Colonic mucosa (tissue), 4 donors: ENCODE measurements at regions of chr22 and their contacts with region 1.

Region 1: GRCh38 chr22:19970479-19971275 is 29.1 kb upstream of the TXNRD2 start:
- DNase-seq: peak; percentile 69
- H3K4me3 ChIP-seq: no peak overlapping the region
- H3K27ac ChIP-seq: no peak overlapping the region
- H3K4me1 ChIP-seq: no peaks in the 10 kb centered on the region
- H3K27me3 ChIP-seq: no peaks in the 10 kb centered on the region
- CTCF ChIP-seq: peak; percentile 94

Region 2: DNA sequence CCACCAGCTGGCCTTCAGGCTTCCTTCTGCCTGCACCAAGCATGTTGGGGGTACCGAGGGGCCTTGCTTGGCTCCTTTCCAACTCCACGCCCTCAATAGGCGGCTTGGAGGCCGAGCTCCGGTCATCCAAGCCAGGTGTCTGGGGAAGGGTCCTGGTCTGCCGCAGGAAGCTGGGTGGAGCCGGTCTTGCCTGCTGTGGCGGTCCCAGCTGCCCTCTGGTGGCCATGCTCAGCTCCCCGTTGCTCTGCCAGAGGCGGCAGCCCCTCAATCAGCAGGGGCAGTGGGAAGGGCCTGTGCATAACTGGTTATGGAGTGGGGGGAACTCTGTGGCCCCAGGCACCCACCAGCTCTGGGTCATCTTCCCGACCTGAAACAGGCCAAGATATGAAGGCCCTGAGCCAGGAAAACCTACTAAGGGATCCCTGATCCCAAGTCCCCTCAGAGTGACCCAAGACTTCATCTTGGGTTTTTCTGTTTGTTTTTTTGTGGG is 42.8 kb after region 1 on chr22:
- intact Hi-C with region 1: loop called (anchors 2 kb)
- DNase-seq: peak; percentile 43
- H3K4me3 ChIP-seq: no peak overlapping the region
- H3K27ac ChIP-seq: no peak overlapping the region
- H3K4me1 ChIP-seq: no peaks in the 10 kb centered on the region
- H3K27me3 ChIP-seq: no peaks in the 10 kb centered on the region
- CTCF ChIP-seq: peak; percentile 48

Region 3: DNA sequence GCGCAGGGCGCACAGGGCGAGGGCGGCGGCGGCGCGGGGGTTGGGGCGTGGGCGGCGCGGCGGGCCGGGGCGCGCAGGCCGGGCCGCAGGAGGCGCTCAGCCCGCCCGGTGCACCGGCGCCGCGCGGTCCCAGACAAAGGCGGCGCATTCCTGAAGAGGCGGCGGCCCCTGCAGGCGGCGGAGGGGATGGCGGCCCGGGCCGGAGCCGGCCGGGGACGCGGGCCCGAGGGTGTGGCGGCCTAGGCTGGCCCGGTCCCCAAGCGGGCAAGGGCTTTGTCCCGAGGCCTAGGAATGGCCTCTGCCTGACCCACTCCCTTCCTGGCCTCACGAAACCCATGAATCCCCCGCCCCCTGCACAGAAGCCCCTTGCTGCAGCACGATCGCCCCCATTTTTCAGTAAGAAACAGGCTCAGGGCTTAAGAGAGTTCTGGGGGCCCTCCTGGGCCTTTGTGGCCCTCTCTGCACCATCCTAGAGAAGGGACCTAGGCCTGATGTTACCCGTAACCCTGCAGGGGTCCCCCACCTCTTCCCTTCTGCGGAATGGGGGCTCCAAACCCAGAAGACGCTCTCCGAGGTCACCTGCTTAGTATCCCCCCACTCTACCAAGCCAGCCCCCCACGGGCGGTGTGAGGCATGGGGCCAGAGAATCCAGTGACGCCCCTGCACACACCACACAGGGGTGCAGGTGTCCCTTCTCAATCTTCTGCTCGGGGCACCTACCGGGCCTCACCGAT is 297.8 kb after region 1 on chr22 and contains the start of gene RTN4R:
- intact Hi-C with region 1: loop called (anchors 10 kb)
- DNase-seq: peak; percentile 65
- H3K4me3 ChIP-seq: peak within 1 kb of the TSS; percentile 39
- H3K27ac ChIP-seq: no peak within 1 kb of the TSS
- H3K4me1 ChIP-seq: peaks cover 6% of the 10 kb centered on the region
- H3K27me3 ChIP-seq: no peaks in the 10 kb centered on the region
- CTCF ChIP-seq: peak; percentile 54
- total RNA-seq, gene RTN4R: 6.1 to 8.5 TPM